ENCODE measurements at regions of chr1 and their contacts with region 1.

Region 1: DNA sequence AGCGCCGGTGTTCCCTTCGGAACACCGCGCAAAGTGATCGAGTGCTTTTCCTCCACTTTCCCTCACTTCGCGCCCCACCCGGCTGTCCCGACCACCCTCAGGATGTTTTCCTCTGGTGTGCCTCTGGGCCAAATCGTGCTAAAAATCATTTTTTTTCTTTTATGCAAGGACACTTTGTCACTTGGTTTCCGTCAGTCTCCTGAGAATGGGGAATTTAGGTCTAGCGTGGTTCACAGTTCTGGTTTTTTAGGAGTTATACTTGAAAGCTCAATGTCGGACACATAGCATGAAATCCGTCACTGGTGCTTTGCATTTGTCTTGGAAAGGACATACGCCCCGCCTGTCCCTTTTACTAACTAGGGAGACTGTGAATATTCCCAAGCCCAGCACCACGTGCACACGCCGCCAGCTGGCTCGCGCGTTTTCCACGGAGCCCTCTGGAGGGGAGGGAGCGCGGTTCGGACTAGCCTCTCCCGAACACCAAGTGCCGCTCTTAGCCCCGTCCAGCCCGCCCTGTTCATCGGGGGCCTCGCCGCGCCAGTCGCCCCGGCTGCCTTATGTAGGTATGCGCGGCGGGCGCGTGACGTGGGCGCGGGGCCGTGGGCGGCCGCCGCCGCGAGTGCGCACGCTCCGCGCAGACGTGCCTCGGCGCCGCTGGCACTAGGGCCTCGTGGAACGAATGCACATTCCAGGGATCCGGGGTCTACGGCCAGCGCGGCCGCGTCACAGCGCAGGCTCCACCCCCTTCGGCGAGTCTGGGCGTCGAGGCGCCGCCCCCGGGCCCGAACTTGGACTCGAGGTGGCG is 572 bp upstream of the IRF2BP2 start:
- DNase-seq: peak; percentile 91
- H3K4me3 Mint-ChIP-seq: peak overlapping the region; percentile 84
- H3K27ac Mint-ChIP-seq: peak overlapping the region; percentile 96
- H3K4me1 Mint-ChIP-seq: peaks cover 33% of the 10 kb centered on the region
- H3K27me3 Mint-ChIP-seq: no peaks in the 10 kb centered on the region

Region 2: DNA sequence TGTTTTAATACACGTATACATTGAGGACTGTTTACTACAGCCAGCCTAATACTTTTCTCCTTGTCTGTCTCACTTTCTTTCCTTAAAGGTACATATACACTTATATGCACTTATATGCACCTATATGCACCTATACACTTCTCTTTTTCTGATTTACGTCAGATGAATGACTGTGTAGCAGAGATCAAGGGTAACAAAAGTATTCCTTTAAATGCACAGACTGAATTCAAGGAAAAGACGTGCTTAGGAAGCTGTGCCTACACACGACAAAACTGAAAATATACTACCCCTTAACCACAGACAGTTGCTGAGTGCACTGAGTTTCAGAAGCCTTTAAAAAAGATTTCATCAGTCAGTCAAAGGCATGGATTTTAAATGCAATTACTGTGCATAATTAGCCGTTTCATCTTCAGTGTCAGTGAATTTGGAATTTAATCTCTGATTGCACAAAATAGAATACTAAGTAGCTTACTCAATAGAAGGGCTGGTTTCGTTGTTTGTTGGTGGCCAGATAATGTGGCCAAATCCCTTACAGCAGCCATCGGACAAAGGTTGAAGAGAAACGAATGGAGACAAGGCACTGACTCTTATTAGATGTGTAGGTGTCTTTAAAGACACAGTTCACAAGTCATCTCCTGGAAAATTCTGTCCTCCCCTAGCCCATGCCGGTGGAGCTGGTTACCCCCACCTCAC is 93.3 kb before region 1 on chr1:
- CTCF ChIA-PET with region 1: no interaction called
- intact Hi-C with region 1: loop called (anchors 1 kb)
- DNase-seq: no peak
- H3K4me3 Mint-ChIP-seq: no peak overlapping the region
- H3K27ac Mint-ChIP-seq: no peak overlapping the region
- H3K4me1 Mint-ChIP-seq: peaks cover 24% of the 10 kb centered on the region
- H3K27me3 Mint-ChIP-seq: no peaks in the 10 kb centered on the region

Region 3: DNA sequence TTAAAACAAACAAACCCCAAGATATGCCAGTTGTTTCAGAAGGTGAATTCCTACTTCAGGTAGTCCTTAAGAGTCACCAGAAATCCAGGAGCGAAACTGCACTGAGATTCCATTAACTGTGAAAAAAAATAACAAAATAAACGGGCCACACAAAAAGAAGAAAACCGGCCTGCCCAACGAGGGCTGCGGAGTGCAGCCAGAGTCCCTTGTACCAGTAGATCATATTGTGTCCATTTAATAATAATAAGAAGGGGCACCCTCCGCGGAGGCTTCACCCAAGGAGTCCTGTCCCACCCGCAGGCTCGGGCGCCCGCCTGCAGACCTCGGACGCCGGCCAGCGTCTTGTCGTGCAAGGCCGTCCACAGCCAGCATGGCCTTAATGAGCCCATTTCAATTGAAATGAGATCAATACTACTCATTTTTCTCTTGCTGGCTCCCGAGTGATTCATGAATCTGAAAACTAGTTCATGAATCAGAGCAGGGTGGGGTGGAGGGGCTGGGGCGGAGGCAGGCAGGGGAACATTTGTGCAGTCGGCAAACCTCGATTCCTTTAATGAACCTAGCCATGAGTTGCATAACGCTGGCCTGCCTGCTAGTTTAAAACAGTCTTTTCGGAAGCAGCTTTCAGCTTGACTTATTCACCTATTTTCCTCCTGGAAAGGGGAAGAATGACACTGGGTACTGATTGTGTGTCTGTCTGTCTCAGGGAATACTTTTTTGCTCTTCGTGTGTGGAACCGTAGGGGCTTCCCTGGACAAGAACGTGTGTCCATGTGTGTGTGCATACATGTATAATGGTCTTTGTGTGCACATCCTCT is 112.6 kb after region 1 on chr1:
- CTCF ChIA-PET with region 1: interaction called, 9 read pairs
- intact Hi-C with region 1: loop called (anchors 1 kb)
- DNase-seq: peak; percentile 91
- H3K4me3 Mint-ChIP-seq: peak overlapping the region; percentile 70
- H3K27ac Mint-ChIP-seq: peak overlapping the region; percentile 97
- H3K4me1 Mint-ChIP-seq: peaks cover 61% of the 10 kb centered on the region
- H3K27me3 Mint-ChIP-seq: no peaks in the 10 kb centered on the region

Region 4: DNA sequence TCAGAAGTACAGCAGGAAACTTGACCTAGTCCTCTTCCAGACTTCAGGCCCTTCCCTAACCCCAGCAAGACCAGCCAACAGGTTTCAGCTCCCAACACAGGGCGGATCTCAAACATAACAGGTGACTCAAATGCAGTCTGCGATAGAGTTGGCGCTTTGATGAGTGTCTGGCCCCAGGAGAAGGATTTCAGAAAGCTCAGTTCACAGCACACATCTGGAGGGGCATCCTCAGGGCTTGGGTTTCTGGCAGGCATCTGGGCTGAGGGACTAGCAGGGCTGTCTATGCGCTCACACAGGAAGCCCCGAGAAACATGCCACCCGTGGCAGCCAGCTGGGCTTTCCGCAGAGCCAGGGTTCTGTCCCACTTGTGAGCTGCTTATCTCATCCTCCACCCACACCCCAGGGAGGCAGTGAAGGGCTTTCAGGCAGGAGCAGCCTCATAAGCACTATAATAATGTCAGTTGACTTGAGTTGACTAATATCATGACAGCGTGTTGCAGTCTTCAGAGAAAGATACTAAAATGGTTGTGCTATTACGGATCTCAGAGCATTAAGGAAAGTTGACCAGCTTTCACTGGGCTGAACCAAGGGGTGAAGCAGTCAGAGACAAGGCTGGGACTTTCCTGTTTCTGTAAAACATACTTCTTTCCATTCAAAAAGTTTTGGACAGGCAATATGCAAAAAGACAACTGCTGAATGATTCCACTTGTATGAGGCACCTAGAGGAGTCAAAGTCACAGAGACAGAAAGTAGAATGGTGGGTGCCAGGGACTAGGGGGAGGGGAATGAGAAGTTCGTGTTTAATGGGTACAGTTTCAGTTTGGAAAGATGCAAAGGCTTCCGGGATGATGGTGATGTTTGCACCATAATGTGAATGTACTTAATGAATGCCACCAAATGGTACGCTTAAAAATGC is 232.4 kb after region 1 on chr1:
- CTCF ChIA-PET with region 1: interaction called, 5 read pairs
- intact Hi-C with region 1: loop called (anchors 1 kb)
- DNase-seq: peak; percentile 95
- H3K4me3 Mint-ChIP-seq: peak overlapping the region; percentile 62
- H3K27ac Mint-ChIP-seq: peak overlapping the region; percentile 96
- H3K4me1 Mint-ChIP-seq: peaks cover 85% of the 10 kb centered on the region
- H3K27me3 Mint-ChIP-seq: no peaks in the 10 kb centered on the region

Region 5: GRCh38 chr1:234978397-234979295 is 368.1 kb after region 1 on chr1:
- CTCF ChIA-PET with region 1: interaction called, 3 read pairs
- intact Hi-C with region 1: loop called (anchors 1 kb)
- DNase-seq: peak; percentile 81
- H3K4me3 Mint-ChIP-seq: peak overlapping the region; percentile 79
- H3K27ac Mint-ChIP-seq: peak overlapping the region; percentile 97
- H3K4me1 Mint-ChIP-seq: peaks cover 59% of the 10 kb centered on the region
- H3K27me3 Mint-ChIP-seq: no peaks in the 10 kb centered on the region

Region 6: DNA sequence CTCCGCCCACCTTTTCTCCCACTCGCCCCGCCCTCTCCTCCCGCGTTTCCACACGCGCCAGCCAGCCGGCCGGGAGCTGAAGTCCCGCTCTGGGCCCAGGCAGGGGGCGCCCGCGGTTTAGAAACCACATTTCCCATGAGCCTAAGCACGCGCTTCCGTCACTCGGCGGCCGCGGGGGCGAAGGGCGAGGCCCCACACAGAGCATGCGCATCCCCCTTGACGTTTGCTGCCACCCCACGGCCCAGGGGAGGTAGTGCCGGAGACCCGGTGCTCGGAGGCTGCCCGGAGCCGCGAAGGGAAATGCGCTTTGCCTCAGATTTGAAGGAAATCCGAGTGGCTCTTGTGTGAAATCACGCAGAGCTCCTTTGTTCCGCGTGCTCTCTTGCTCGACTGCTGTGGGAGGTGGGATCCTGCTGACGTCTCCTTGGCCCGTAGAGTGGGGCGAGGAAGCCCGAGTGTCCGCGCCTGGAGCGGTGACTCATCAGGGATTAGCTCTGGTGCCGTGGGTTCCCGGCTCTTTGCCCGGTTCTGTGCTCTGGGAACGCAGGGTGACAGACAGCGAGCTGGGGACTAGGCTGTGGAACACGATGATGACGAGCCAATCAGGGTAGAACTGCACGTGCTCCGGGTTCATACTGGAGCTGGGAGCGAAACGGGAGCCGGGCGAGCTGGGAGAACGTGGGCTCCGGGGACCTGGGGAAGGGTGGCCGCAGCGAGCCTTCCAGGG is 894.1 kb after region 1 on chr1:
- CTCF ChIA-PET with region 1: no interaction called
- intact Hi-C with region 1: loop called (anchors 2 kb)
- DNase-seq: peak; percentile 99
- H3K4me3 Mint-ChIP-seq: peak overlapping the region; percentile 97
- H3K27ac Mint-ChIP-seq: peak overlapping the region; percentile 97
- H3K4me1 Mint-ChIP-seq: peaks cover 31% of the 10 kb centered on the region
- H3K27me3 Mint-ChIP-seq: no peaks in the 10 kb centered on the region